ENCODE measurements at regions of chrX and their contacts with region 1.

Region 1: GRCh38 chrX:103686199-103687072 is at the start of gene MORF4L2:
- DNase-seq: peak; percentile 93 to 96
- ATAC-seq: peak; percentile 87 to 91
- H3K4me3 ChIP-seq: peak within 1 kb of the TSS; percentile 73 to 74 (median 74)
- H3K27ac ChIP-seq: peak within 1 kb of the TSS; percentile 94 to 99 (median 97)
- H3K4me1 ChIP-seq: peaks cover 5 to 9% of the 10 kb centered on the region in 2 donors
- H3K27me3 ChIP-seq: no peaks in the 10 kb centered on the region
- CTCF ChIP-seq: no peak
- POLR2A ChIP-seq: peak; percentile 78 to 90
- total RNA-seq, gene MORF4L2: 190 to 317 (median 213) TPM

Region 2: GRCh38 chrX:103585411-103586313 is 100.8 kb before region 1 on chrX and contains the start of gene TCEAL4:
- in situ Hi-C with region 1: no loop called
- intact Hi-C with region 1: loop called (anchors 5 kb)
- DNase-seq: peak; percentile 27 to 43
- ATAC-seq: peak; percentile 88 to 94
- H3K4me3 ChIP-seq: peak within 1 kb of the TSS; percentile 61 to 77 (median 68)
- H3K27ac ChIP-seq: peak within 1 kb of the TSS; percentile 79 to 89 (median 88)
- H3K4me1 ChIP-seq: no peaks in the 10 kb centered on the region
- H3K27me3 ChIP-seq: no peaks in the 10 kb centered on the region
- CTCF ChIP-seq: no peak
- POLR2A ChIP-seq: peak; percentile 47 to 51
- total RNA-seq, gene TCEAL4: 21.1 to 30.5 (median 28.2) TPM

Region 3: GRCh38 chrX:103629318-103630170 is 56.9 kb before region 1 on chrX:
- in situ Hi-C with region 1: no loop called
- intact Hi-C with region 1: loop called (anchors 2 kb)
- DNase-seq: peak; percentile 19 to 44
- ATAC-seq: peak; percentile 80 to 83
- H3K4me3 ChIP-seq: peak overlapping the region; percentile 60 to 74 (median 71)
- H3K27ac ChIP-seq: peak overlapping the region; percentile 79 to 95 (median 92)
- H3K4me1 ChIP-seq: peaks cover 5 to 10% of the 10 kb centered on the region in 2 donors
- H3K27me3 ChIP-seq: no peaks in the 10 kb centered on the region
- CTCF ChIP-seq: peak in 3 of 5 experiments; percentile 19 to 47 (median 27)
- POLR2A ChIP-seq: peak in 1 of 2 donors; percentile 23

Region 4: DNA sequence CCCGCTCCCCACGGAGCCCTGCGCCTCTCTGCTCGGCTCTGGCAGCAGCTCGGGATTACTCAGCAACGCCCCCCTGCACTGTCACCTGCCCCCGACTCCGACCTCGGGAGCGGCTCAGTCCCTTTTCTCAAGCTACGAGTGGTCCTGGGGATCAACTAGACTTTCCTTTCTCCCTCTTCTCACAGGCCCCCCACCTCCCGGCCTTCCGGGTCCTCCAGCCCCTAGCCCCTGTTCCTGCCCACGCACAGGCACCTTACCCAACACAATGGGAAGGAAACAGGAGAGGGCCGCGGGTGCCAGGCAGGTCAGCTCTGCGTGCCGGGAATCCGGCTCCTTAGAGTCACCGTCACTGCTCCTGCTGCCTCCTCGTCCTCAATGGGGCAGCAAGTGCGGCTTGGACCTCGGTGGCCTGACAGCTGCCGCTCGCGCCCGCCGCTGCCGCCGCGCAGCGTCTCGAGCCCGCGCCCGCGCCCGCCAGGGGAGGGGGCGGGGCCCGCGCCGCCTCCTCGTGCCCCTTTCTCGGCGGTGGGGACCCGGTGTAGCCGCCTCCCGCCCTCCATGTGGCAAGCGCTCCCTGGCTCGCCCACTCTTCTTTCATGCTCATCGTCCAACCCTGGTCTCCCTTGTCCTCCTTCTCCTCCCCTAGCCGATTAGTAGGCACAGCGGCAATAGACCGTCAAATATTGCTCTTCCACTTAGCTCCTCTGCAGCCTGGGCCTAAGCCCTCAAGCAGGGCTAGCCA is 145.5 kb after region 1 on chrX and contains the start of gene RAB9B:
- in situ Hi-C with region 1: loop called in 1 of 4 experiments (anchors 10 kb)
- intact Hi-C with region 1: loop called (anchors 2 kb)
- DNase-seq: peak; percentile 32 to 63
- ATAC-seq: peak; percentile 88 to 91
- H3K4me3 ChIP-seq: peak within 1 kb of the TSS; percentile 64 to 75 (median 72)
- H3K27ac ChIP-seq: peak within 1 kb of the TSS; percentile 85 to 90 (median 87)
- H3K4me1 ChIP-seq: peaks cover 0 to 3% of the 10 kb centered on the region in 2 donors
- H3K27me3 ChIP-seq: no peaks in the 10 kb centered on the region
- CTCF ChIP-seq: no peak
- POLR2A ChIP-seq: peak in 1 of 2 donors; percentile 29
- total RNA-seq, gene RAB9B: 1.8 to 5.7 (median 4.7) TPM